Gastrocnemius medialis (tissue), 4 donors: ENCODE measurements at regions of chr11 and their contacts with region 1.

Region 1: GRCh38 chr11:18588297-18589252 is at the start of gene UEVLD:
- DNase-seq: peak; percentile 81 to 87
- ATAC-seq: peak; percentile 92 to 97
- H3K4me3 ChIP-seq: peak within 1 kb of the TSS; percentile 72 to 91 (median 80)
- H3K27ac ChIP-seq: peak within 1 kb of the TSS; percentile 86 to 91 (median 90)
- H3K4me1 ChIP-seq: peaks cover 41 to 42% of the 10 kb centered on the region in 2 donors
- H3K27me3 ChIP-seq: no peaks in the 10 kb centered on the region
- CTCF ChIP-seq: peak in 1 of 5 experiments; percentile 30
- POLR2A ChIP-seq: peak; percentile 63 to 78
- total RNA-seq, gene UEVLD: 27.4 to 58.8 (median 30.3) TPM

Region 2: GRCh38 chr11:18321980-18322711 is 266.4 kb before region 1 on chr11 and contains the starts of genes GTF2H1 and HPS5:
- in situ Hi-C with region 1: no loop called
- intact Hi-C with region 1: loop called (anchors 2 kb)
- DNase-seq: peak; percentile 93 to 95
- ATAC-seq: peak; percentile 99 to 100
- H3K4me3 ChIP-seq: peak within 1 kb of the TSS; percentile 88 to 89 (median 88)
- H3K27ac ChIP-seq: peak within 1 kb of the TSS; percentile 95 to 99 (median 98)
- H3K4me1 ChIP-seq: peaks cover 31 to 37% of the 10 kb centered on the region in 2 donors
- H3K27me3 ChIP-seq: no peaks in the 10 kb centered on the region
- CTCF ChIP-seq: peak in 1 of 5 experiments; percentile 54
- POLR2A ChIP-seq: peak; percentile 53 to 81
- total RNA-seq, gene GTF2H1: 30.9 to 45.6 (median 33.2) TPM
- total RNA-seq, gene HPS5: 5.3 to 13.1 (median 9.7) TPM

Region 3: GRCh38 chr11:18721561-18722292 is 133.2 kb after region 1 on chr11:
- in situ Hi-C with region 1: no loop called
- intact Hi-C with region 1: loop called (anchors 5 kb)
- DNase-seq: no peak
- ATAC-seq: peak; percentile 66 to 72
- H3K4me3 ChIP-seq: peak overlapping the region; percentile 59 to 74 (median 65)
- H3K27ac ChIP-seq: peak overlapping the region; percentile 42 to 73 (median 55)
- H3K4me1 ChIP-seq: peaks cover 0 to 7% of the 10 kb centered on the region in 2 donors
- H3K27me3 ChIP-seq: no peaks in the 10 kb centered on the region
- CTCF ChIP-seq: peak; percentile 41 to 81 (median 64)
- POLR2A ChIP-seq: no peak